Esophagus muscularis mucosa (tissue), 4 donors: ENCODE measurements at regions of chr17 and their contacts with region 1.

Region 1: DNA sequence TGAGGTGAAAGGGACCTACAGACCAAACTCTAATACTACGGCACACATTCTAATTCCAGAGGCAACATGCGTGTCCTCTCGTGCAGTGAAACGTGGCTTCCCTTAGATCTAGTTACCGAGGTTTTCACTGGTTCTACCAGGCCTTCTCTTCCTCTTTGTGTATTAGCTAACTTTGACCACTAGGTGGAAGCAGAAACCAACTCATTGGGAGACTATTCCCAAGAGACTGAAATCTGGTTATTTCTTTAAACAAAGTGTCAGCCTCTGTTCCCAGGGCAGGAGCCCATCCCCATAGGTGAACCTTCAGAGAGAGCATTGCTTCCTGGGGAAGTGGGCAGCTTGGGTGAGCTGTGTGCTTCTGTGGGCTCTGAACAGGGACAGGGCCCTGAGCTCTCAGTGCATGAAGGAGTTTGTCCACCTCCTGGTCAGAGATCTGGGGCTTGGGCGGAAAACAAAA is 19.7 kb upstream of the RCVRN start:
- DNase-seq: no peak
- H3K4me3 ChIP-seq: no peak overlapping the region
- H3K27ac ChIP-seq: peak overlapping the region in 1 of 4 donors; percentile 20
- H3K4me1 ChIP-seq: peaks cover 0 to 18% (median 11%) of the 10 kb centered on the region in 4 donors
- H3K27me3 ChIP-seq: no peaks in the 10 kb centered on the region
- CTCF ChIP-seq: peak; percentile 78 to 90 (median 88)
- EP300 ChIP-seq: no peak
- POLR2A ChIP-seq: no peak

Region 2: DNA sequence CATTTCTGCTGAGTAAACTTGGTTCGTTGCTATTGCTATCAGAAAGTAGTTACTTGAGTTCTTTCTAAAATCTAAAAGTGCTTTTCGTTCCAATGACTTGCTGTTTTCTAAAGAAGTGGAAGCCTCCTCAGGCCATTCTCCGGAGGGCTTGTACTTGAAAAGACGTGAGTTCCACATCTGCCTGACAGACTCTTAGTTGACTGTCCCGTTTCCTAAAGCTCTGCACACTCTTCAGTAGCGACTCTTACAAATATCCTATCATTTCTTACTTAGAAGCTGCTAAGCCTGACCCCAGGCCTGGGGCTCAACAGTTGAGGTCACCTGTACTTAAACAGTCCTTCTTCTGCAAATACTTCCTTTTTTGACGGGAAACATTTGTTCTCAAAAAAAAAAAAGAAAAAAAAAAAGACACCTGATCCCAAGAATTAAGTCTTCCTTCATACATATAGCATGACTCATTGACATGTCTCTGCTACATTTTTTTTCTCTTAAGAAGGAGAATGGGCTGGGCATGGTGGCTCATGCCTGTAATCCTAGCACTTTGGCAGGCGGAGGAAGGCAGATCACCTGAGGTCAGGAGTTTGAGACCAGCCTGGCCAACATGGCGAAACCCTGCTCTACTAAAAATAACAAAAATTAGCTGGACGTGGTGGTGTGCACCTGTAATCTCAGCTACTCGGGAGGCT is 194.9 kb before region 1 on chr17:
- intact Hi-C with region 1: loop called (anchors 2 kb)
- DNase-seq: no peak
- H3K4me3 ChIP-seq: no peak overlapping the region
- H3K27ac ChIP-seq: no peak overlapping the region
- H3K4me1 ChIP-seq: no peaks in the 10 kb centered on the region
- H3K27me3 ChIP-seq: peaks cover 0 to 9% (median 0%) of the 10 kb centered on the region in 4 donors
- CTCF ChIP-seq: no peak
- EP300 ChIP-seq: no peak
- POLR2A ChIP-seq: no peak

Region 3: DNA sequence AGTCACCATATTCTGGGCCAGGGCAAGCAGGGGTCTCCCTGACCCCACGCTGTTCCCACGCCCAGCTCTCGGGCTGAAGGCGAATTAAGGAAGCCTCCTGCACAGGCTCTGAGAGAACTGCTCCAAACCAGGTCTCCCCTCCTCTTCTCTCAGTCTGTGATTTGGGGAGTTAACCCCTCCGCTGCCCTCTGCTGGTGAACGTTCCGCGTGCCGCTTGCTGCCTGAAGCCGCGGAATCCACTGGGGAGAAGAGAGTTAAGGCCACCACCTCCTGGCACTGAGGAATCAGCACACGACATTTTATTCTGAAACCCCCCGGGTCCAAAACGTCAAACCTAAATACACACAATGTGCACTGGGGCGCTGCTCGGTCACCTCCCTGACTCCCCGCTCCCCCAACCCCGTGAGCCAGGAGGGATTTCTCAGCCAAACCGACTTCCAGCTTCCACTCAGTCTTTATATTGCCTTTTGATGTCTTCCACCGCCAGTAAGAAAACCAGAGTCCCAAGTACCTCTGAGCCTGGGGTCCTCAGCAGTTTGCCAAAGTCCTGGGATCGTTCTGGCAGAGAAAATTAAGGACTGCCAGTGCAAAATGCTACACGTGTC is 34.7 kb after region 1 on chr17:
- intact Hi-C with region 1: no loop called
- DNase-seq: no peak
- H3K4me3 ChIP-seq: peak overlapping the region in 3 of 4 donors; percentile 17 to 29 (median 20)
- H3K27ac ChIP-seq: no peak overlapping the region
- H3K4me1 ChIP-seq: peaks cover 0 to 23% (median 17%) of the 10 kb centered on the region in 4 donors
- H3K27me3 ChIP-seq: peaks cover 0 to 33% (median 4%) of the 10 kb centered on the region in 4 donors
- CTCF ChIP-seq: peak in 2 of 3 experiments; percentile 36 to 39
- EP300 ChIP-seq: no peak
- POLR2A ChIP-seq: no peak

Region 4: GRCh38 chr17:10013365-10014221 is 88.8 kb after region 1 on chr17:
- intact Hi-C with region 1: no loop called
- DNase-seq: no peak
- H3K4me3 ChIP-seq: no peak overlapping the region
- H3K27ac ChIP-seq: peak overlapping the region in 1 of 4 donors; percentile 27
- H3K4me1 ChIP-seq: peaks cover 0 to 31% (median 18%) of the 10 kb centered on the region in 4 donors
- H3K27me3 ChIP-seq: no peaks in the 10 kb centered on the region
- CTCF ChIP-seq: no peak
- EP300 ChIP-seq: no peak
- POLR2A ChIP-seq: no peak

Region 5: GRCh38 chr17:10226930-10227685 is 302.3 kb after region 1 on chr17:
- intact Hi-C with region 1: loop called (anchors 10 kb)
- DNase-seq: no peak
- H3K4me3 ChIP-seq: no peak overlapping the region
- H3K27ac ChIP-seq: no peak overlapping the region
- H3K4me1 ChIP-seq: no peaks in the 10 kb centered on the region
- H3K27me3 ChIP-seq: no peaks in the 10 kb centered on the region
- CTCF ChIP-seq: peak; percentile 72 to 87 (median 81)
- EP300 ChIP-seq: no peak
- POLR2A ChIP-seq: no peak

Region 6: DNA sequence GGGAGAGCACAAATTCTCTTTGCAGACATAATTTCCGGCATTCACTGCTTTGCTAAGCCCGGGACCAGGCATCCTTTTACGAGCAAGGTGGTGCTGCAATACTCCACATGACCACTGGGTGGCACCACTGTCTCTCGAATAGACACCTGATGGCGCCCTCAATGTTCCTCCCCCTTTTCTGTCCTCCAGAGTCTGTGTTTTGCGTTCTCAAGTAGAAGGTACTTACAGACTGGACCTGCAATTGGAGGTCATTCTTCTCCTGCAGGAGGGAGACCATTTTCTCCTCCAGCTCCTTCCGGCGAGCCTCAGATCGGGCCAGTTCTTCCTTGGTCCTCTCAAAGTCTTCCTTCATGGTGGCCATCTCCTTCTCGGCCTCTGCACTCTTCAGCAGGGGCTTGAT is 402.9 kb after region 1 on chr17:
- intact Hi-C with region 1: loop called (anchors 10 kb)
- DNase-seq: peak; percentile 94
- H3K4me3 ChIP-seq: no peak overlapping the region
- H3K27ac ChIP-seq: no peak overlapping the region
- H3K4me1 ChIP-seq: peaks cover 0 to 4% (median 0%) of the 10 kb centered on the region in 4 donors
- H3K27me3 ChIP-seq: peaks cover 0 to 10% (median 0%) of the 10 kb centered on the region in 4 donors
- CTCF ChIP-seq: peak; percentile 80 to 96 (median 87)
- EP300 ChIP-seq: no peak
- POLR2A ChIP-seq: no peak

Region 7: DNA sequence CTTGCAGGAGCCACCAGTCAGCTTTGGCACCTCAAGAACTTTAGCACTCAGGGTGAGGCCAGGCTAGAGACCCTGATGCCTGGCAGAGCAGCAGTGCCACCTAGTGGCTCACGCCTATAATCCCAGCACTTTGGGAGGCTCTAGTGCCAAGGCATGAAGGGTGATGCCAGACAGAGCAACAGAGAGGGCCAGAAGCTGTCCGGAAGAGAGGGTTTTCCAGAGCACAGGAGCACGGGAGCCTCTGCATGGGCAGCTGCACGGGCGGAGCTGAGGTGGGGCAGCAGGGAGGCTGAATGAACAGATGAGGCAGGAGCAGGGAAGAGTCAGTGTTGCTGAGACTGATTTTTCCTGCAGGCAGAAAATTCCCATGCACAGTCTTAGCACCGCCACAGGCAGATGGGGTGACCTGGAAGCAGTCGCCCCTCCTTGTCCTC is 693.5 kb after region 1 on chr17:
- intact Hi-C with region 1: loop called (anchors 10 kb)
- DNase-seq: no peak
- H3K4me3 ChIP-seq: no peak overlapping the region
- H3K27ac ChIP-seq: no peak overlapping the region
- H3K4me1 ChIP-seq: peaks cover 0 to 15% (median 9%) of the 10 kb centered on the region in 4 donors
- H3K27me3 ChIP-seq: no peaks in the 10 kb centered on the region
- CTCF ChIP-seq: peak; percentile 68 to 84 (median 70)
- EP300 ChIP-seq: no peak
- POLR2A ChIP-seq: no peak